ENCODE measurements at regions of chr15 and their contacts with region 1.

Region 1: GRCh38 chr15:60315878-60316277 is 81.9 kb downstream of the ANXA2 start:
- DNase-seq: no peak
- H3K4me3 ChIP-seq: no peak overlapping the region
- H3K27ac ChIP-seq: no peak overlapping the region
- H3K4me1 ChIP-seq: no peaks in the 10 kb centered on the region
- H3K27me3 ChIP-seq: no peaks in the 10 kb centered on the region
- CTCF ChIP-seq: no peak
- EP300 ChIP-seq: no peak
- POLR2A ChIP-seq: no peak

Region 2: DNA sequence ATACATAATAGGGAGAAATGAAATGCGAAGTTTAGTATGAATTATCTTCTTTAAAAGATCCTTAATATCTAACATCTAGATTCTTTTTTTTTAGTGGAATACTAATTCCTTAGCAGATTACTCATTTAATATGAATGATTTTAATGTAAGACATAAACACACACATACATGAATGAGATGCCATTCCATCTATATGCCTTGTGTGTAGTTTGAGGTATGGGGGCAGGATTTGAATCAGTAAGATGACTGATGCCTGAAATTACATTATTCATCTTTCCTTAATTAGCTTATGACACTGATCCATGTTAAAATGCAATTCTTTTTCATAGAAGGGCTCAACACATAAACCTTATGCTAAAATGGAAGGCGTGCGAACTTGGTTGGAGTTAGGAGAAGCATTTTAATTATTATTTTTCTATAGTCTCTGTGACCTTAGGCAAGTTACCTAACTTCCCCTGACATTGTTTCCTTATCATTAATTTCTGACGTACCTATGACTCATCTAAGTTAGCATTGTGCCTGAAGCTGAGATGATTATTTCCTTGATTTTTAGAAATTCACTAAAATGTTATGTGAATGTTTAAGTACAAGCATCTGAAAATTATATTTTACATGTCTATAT is 616.0 kb before region 1 on chr15:
- intact Hi-C with region 1: loop called in 2 of 4 experiments (anchors 5 to 10 kb)
- DNase-seq: no peak
- H3K4me3 ChIP-seq: no peak overlapping the region
- H3K27ac ChIP-seq: no peak overlapping the region
- H3K4me1 ChIP-seq: no peaks in the 10 kb centered on the region
- H3K27me3 ChIP-seq: no peaks in the 10 kb centered on the region
- CTCF ChIP-seq: no peak
- EP300 ChIP-seq: no peak
- POLR2A ChIP-seq: no peak